Panc1 (cell line): ENCODE measurements at regions of chr2 and their contacts with region 1.

Region 1: GRCh38 chr2:25878361-25879132 is at the start of gene ASXL2:
- DNase-seq: peak; percentile 87
- ATAC-seq: peak; percentile 96
- H3K4me3 ChIP-seq: peak within 1 kb of the TSS; percentile 81 to 92
- H3K27ac ChIP-seq: peak within 1 kb of the TSS; percentile 98
- H3K4me1 ChIP-seq: peaks cover 13% of the 10 kb centered on the region; the same call in 1 of the 2 replicates
- H3K27me3 ChIP-seq: no peaks in the 10 kb centered on the region
- CTCF ChIP-seq: no peak
- total RNA-seq, gene ASXL2: 43.4 TPM

Region 2: DNA sequence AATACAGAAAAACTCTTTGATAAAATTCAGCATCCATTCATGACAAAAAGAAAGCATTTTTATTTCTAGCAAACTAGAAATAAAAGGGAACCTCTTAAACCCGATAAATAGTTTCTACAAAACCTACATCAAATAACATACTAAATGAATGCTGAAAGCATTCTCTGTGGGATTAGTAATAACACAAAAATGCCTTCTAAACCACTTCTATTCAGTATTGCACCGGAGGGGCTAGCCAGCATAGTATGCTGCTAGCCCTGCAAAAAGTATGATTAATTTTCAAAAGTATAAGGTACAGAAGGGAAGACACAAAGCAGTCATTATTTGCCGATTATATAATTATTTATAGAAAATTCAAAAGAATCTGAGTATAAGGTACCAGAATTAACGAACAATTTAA is 350.4 kb before region 1 on chr2:
- CTCF ChIA-PET with region 1: no interaction called
- POLR2A ChIA-PET with region 1: no interaction called
- in situ Hi-C with region 1: no loop called
- intact Hi-C with region 1: no loop called
- DNase-seq: no peak
- ATAC-seq: no peak
- H3K4me3 ChIP-seq: no peak overlapping the region
- H3K27ac ChIP-seq: no peak overlapping the region
- H3K4me1 ChIP-seq: no peaks in the 10 kb centered on the region
- H3K27me3 ChIP-seq: no peaks in the 10 kb centered on the region
- CTCF ChIP-seq: no peak

Region 3: DNA sequence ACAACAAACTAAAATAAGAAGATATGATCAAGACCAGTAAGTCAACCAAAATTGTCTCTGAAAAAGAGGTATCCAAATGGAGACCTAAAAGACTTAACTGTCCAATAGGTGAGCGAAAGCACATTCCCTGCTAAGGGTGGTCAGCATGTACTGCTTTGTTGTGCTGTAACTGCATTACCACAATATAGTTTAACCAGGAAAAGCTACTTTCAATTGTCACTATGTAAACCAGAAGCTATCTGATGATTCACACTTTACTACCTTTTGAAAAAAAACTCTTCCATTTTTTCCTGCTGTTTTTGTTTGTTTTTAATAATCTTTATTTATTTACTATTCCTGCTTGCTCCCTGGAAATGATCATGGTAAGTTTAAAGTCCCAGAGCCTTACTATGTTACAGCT is 36.4 kb before region 1 on chr2:
- CTCF ChIA-PET with region 1: no interaction called
- POLR2A ChIA-PET with region 1: interaction called, 11 read pairs
- in situ Hi-C with region 1: no loop called
- intact Hi-C with region 1: no loop called
- DNase-seq: no peak
- ATAC-seq: no peak
- H3K4me3 ChIP-seq: no peak overlapping the region
- H3K27ac ChIP-seq: no peak overlapping the region
- H3K4me1 ChIP-seq: no peaks in the 10 kb centered on the region
- H3K27me3 ChIP-seq: no peaks in the 10 kb centered on the region
- CTCF ChIP-seq: no peak

Region 4: DNA sequence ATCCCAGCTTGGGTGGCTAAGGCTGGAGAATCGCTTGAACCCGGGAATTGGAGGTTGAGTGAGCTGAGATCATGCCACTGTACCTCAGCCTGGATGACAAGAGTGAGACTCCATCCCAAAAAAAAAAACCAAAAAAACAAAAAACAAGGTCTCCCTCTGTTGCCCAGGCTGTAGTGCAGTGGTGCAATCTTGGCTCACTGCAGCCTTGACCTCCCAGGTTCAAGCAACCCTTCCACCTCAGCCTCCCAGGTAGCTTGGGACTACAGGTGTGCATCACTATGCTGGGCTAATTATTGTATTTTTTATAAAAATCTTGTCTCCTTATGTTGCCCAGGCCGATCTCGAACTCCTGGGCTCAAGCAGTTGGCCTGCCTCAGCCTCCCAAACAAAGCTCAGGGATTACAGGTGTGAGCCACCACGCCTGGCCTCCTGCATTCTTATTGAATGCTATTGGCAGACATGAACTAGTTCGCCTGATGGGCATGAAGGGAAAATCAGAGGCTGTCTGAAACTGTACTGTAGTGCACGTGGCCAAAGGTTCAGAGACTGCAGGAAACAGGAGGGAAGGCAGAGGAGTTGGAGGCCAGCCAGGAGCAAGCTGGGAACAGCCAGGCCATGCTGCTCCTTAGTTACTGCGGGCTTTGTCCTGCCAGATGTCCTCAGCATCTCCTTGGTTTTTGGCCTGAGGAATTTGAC is 15.7 kb after region 1 on chr2:
- CTCF ChIA-PET with region 1: no interaction called
- POLR2A ChIA-PET with region 1: interaction called, 16 read pairs
- in situ Hi-C with region 1: no loop called
- intact Hi-C with region 1: no loop called
- DNase-seq: no peak
- ATAC-seq: no peak
- H3K4me3 ChIP-seq: no peak overlapping the region
- H3K27ac ChIP-seq: no peak overlapping the region
- H3K4me1 ChIP-seq: no peaks in the 10 kb centered on the region
- H3K27me3 ChIP-seq: no peaks in the 10 kb centered on the region
- CTCF ChIP-seq: no peak

Region 5: DNA sequence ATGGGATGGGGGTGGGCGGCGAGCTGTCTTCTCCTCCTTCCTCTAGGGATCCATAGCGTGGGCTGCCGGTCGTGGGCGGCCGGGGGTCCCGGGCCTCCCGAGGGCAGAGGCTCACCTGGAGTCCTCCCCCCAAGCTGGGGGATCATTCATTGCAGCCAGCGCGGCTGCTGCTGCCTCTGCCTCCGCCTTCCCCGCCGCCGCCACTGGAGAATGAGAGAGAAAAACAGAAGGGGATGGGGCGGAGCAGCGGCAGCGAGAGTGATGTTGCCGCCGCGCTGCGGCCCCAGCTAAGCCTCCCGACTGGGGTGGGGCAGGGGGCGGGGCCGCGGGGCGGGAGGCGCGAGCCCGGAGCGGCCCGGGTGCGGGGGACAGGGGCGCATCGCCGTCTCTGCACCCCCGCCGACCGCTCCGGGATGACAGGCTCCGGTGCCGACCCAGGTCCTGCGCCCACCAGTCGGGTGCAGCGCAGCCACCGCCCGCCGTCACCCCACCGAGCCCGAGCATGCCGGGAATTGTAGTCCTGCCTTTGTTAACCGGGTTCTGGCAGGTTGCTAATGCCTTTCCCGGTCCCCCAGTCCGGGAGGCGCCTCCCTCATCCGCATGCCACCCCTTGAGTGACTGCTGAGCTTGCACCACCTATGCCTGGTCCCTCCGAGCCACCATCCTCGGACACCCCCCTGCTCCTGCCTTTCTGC is 103.9 kb after region 1 on chr2 and contains the start of gene KIF3C:
- CTCF ChIA-PET with region 1: no interaction called
- POLR2A ChIA-PET with region 1: no interaction called
- in situ Hi-C with region 1: no loop called
- intact Hi-C with region 1: no loop called
- DNase-seq: no peak
- ATAC-seq: peak; percentile 83
- H3K4me3 ChIP-seq: peak within 1 kb of the TSS; percentile 69 to 74
- H3K27ac ChIP-seq: peak within 1 kb of the TSS; percentile 82
- H3K4me1 ChIP-seq: peaks cover 41% of the 10 kb centered on the region
- H3K27me3 ChIP-seq: no peaks in the 10 kb centered on the region
- CTCF ChIP-seq: no peak
- total RNA-seq, gene KIF3C: 55.7 TPM